CD4-positive, alpha-beta T cell (primary cell): ENCODE measurements at regions of chr19 and their contacts with region 1.

Region 1: GRCh38 chr19:12440541-12441316 is at the start of gene ZNF443:
- DNase-seq: peak; percentile 96 to 99 (median 98)
- ATAC-seq: peak; percentile 98
- H3K4me3 ChIP-seq: peak within 1 kb of the TSS; percentile 85
- H3K4me3 Mint-ChIP-seq: peak within 1 kb of the TSS; percentile 100
- H3K27ac ChIP-seq: peak within 1 kb of the TSS in 1 of 2 donors; percentile 46
- H3K27ac Mint-ChIP-seq: peak within 1 kb of the TSS; percentile 86
- H3K4me1 ChIP-seq: peaks cover 17% of the 10 kb centered on the region
- H3K4me1 Mint-ChIP-seq: peaks cover 13% of the 10 kb centered on the region
- H3K27me3 ChIP-seq: no peaks in the 10 kb centered on the region
- H3K27me3 Mint-ChIP-seq: no peaks in the 10 kb centered on the region
- CTCF ChIP-seq: no peak
- total RNA-seq, gene ZNF443: 1.8 to 2.0 TPM

Region 2: DNA sequence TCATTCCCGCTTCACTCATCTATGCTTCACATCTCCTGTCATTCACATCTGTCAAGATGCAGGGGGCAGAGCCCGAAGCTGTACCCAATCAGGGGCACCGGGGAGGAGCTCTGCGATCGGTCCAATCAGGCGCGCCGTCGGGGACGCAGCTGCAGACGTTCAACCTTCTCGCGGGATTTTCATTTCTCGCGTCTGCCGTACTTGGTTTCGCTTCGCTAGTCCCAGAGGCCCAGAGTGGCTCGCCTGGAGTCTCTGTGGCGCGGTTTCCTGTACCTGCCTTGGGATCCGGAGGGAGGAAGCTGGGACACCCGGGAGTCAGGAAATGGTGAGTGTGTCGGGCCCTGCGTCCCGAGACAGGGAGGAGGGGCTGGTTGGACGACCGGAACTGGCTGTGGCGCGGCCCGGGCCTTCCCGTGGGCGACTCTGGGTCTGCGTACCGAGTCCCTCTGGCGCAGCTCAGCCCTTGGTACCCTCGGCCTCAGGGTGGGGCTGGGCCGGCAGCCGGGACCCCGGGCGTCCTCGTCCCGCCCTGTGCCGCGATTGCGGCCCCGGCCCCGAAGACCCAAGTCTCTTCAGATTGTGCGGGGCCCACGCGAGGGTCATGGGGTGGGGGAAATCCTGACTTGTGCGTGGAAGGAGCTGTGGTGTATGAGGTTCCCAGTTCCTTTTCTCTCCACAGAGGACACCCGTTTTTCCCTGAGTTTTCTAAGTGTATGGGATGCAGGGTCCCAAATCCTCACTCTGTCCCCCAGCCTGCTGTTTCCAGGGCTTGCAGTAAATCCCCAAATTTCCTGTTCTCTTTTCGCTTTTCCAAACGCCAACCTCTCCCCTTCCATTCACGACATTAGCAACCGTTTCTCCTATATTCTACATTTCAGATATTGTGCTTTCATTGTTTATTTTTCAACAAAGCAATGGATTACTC is 277.6 kb before region 1 on chr19 and contains the start of gene ZNF136:
- CTCF ChIA-PET with region 1: no interaction called
- POLR2A ChIA-PET with region 1: interaction called, 4 read pairs
- intact Hi-C with region 1: loop called in 1 of 2 experiments (anchors 5 kb)
- DNase-seq: peak; percentile 84 to 97 (median 90)
- ATAC-seq: peak; percentile 99
- H3K4me3 ChIP-seq: peak within 1 kb of the TSS; percentile 89
- H3K4me3 Mint-ChIP-seq: peak within 1 kb of the TSS; percentile 97
- H3K27ac ChIP-seq: peak within 1 kb of the TSS; percentile 88 to 96
- H3K27ac Mint-ChIP-seq: peak within 1 kb of the TSS; percentile 89
- H3K4me1 ChIP-seq: peaks cover 42% of the 10 kb centered on the region
- H3K4me1 Mint-ChIP-seq: peaks cover 50% of the 10 kb centered on the region
- H3K27me3 ChIP-seq: no peaks in the 10 kb centered on the region
- H3K27me3 Mint-ChIP-seq: no peaks in the 10 kb centered on the region
- CTCF ChIP-seq: no peak
- total RNA-seq, gene ZNF136: 40.5 to 45.6 TPM

Region 3: GRCh38 chr19:12294249-12295158 is 146.2 kb before region 1 on chr19 and contains the start of gene ZNF44:
- CTCF ChIA-PET with region 1: no interaction called
- POLR2A ChIA-PET with region 1: no interaction called
- intact Hi-C with region 1: loop called (anchors 2 to 5 kb)
- DNase-seq: peak; percentile 88 to 99 (median 94)
- ATAC-seq: peak; percentile 95
- H3K4me3 ChIP-seq: peak within 1 kb of the TSS; percentile 96
- H3K4me3 Mint-ChIP-seq: peak within 1 kb of the TSS; percentile 98
- H3K27ac ChIP-seq: peak within 1 kb of the TSS; percentile 78 to 92
- H3K27ac Mint-ChIP-seq: peak within 1 kb of the TSS; percentile 99
- H3K4me1 ChIP-seq: peaks cover 46% of the 10 kb centered on the region
- H3K4me1 Mint-ChIP-seq: peaks cover 41% of the 10 kb centered on the region
- H3K27me3 ChIP-seq: no peaks in the 10 kb centered on the region
- H3K27me3 Mint-ChIP-seq: no peaks in the 10 kb centered on the region
- CTCF ChIP-seq: no peak
- total RNA-seq, gene ZNF44: 30.4 to 31.4 TPM

Region 4: DNA sequence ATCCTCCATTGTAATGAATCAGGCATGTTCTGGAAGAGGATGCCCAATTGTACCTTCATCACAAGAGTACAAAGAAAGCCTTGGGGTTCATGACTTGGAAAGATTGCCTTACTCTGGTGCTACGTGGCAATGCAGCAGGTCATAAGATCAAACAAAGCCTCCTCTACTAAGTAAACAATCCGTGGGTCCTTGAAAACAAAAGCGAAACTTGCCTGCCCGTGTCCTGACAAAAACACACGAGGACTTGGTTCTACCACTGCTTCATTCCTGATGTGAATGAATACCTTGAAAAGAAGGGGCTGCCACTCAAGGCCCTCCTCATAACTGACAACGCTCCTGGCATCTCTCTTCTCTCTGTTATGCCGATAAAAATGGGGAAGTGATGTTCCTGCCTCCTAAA is 126.2 kb before region 1 on chr19:
- CTCF ChIA-PET with region 1: no interaction called
- POLR2A ChIA-PET with region 1: no interaction called
- intact Hi-C with region 1: no loop called
- DNase-seq: peak in 1 of 14 experiments; percentile 21
- ATAC-seq: no peak
- H3K4me3 ChIP-seq: no peak overlapping the region
- H3K4me3 Mint-ChIP-seq: no peak overlapping the region
- H3K27ac ChIP-seq: no peak overlapping the region
- H3K27ac Mint-ChIP-seq: no peak overlapping the region
- H3K4me1 ChIP-seq: no peaks in the 10 kb centered on the region
- H3K4me1 Mint-ChIP-seq: peaks cover 5% of the 10 kb centered on the region
- H3K27me3 ChIP-seq: no peaks in the 10 kb centered on the region
- H3K27me3 Mint-ChIP-seq: no peaks in the 10 kb centered on the region
- CTCF ChIP-seq: no peak

Region 5: GRCh38 chr19:12400633-12401502 is 39.9 kb before region 1 on chr19 and contains the start of gene ZNF799:
- CTCF ChIA-PET with region 1: interaction called, 3 read pairs
- POLR2A ChIA-PET with region 1: interaction called, 11 read pairs
- intact Hi-C with region 1: loop called in 1 of 2 experiments (anchors 5 kb)
- DNase-seq: peak; percentile 54 to 90 (median 75)
- ATAC-seq: peak; percentile 92
- H3K4me3 ChIP-seq: peak within 1 kb of the TSS; percentile 95
- H3K4me3 Mint-ChIP-seq: peak within 1 kb of the TSS; percentile 93
- H3K27ac ChIP-seq: no peak within 1 kb of the TSS
- H3K27ac Mint-ChIP-seq: peak within 1 kb of the TSS; percentile 81
- H3K4me1 ChIP-seq: peaks cover 9% of the 10 kb centered on the region
- H3K4me1 Mint-ChIP-seq: peaks cover 27% of the 10 kb centered on the region
- H3K27me3 ChIP-seq: no peaks in the 10 kb centered on the region
- H3K27me3 Mint-ChIP-seq: no peaks in the 10 kb centered on the region
- CTCF ChIP-seq: no peak
- total RNA-seq, gene ZNF799: 1.1 to 1.6 TPM

Region 6: GRCh38 chr19:12425888-12426274 is 14.8 kb before region 1 on chr19:
- CTCF ChIA-PET with region 1: no interaction called
- POLR2A ChIA-PET with region 1: no interaction called
- intact Hi-C with region 1: no loop called
- DNase-seq: no peak
- ATAC-seq: no peak
- H3K4me3 ChIP-seq: no peak overlapping the region
- H3K4me3 Mint-ChIP-seq: no peak overlapping the region
- H3K27ac ChIP-seq: no peak overlapping the region
- H3K27ac Mint-ChIP-seq: no peak overlapping the region
- H3K4me1 ChIP-seq: no peaks in the 10 kb centered on the region
- H3K4me1 Mint-ChIP-seq: no peaks in the 10 kb centered on the region
- H3K27me3 ChIP-seq: no peaks in the 10 kb centered on the region
- H3K27me3 Mint-ChIP-seq: no peaks in the 10 kb centered on the region
- CTCF ChIP-seq: no peak

Region 7: DNA sequence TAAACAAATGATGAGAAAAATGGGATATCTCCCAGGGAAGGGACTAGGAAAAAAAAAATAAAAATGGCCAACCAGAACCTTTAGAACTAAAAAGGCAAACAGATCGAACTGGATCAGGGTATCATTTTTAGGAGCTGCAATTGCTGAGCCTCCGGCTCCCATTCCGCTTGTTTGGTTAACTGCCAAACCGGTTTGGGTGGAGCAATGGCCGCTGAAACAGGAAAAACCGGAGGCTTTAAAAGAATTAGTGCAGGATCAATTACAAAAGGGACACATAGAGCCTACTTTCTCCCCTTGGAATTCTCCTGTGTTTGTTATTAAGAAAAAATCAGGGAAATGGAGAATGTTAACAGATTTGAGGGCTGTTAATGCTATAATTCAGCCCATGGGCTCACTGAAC is 12.8 kb after region 1 on chr19:
- CTCF ChIA-PET with region 1: no interaction called
- POLR2A ChIA-PET with region 1: no interaction called
- intact Hi-C with region 1: no loop called
- DNase-seq: no peak
- ATAC-seq: no peak
- H3K4me3 ChIP-seq: no peak overlapping the region
- H3K4me3 Mint-ChIP-seq: no peak overlapping the region
- H3K27ac ChIP-seq: no peak overlapping the region
- H3K27ac Mint-ChIP-seq: no peak overlapping the region
- H3K4me1 ChIP-seq: no peaks in the 10 kb centered on the region
- H3K4me1 Mint-ChIP-seq: no peaks in the 10 kb centered on the region
- H3K27me3 ChIP-seq: no peaks in the 10 kb centered on the region
- H3K27me3 Mint-ChIP-seq: no peaks in the 10 kb centered on the region
- CTCF ChIP-seq: no peak

Region 8: GRCh38 chr19:12484371-12485051 is 43.8 kb after region 1 on chr19 and contains the start of gene ZNF709:
- CTCF ChIA-PET with region 1: no interaction called
- POLR2A ChIA-PET with region 1: no interaction called
- intact Hi-C with region 1: loop called (anchors 2 to 5 kb)
- DNase-seq: peak; percentile 73 to 93 (median 86)
- ATAC-seq: peak; percentile 98
- H3K4me3 ChIP-seq: peak within 1 kb of the TSS; percentile 99
- H3K4me3 Mint-ChIP-seq: peak within 1 kb of the TSS; percentile 98
- H3K27ac ChIP-seq: peak within 1 kb of the TSS; percentile 52 to 68
- H3K27ac Mint-ChIP-seq: peak within 1 kb of the TSS; percentile 97
- H3K4me1 ChIP-seq: peaks cover 37% of the 10 kb centered on the region
- H3K4me1 Mint-ChIP-seq: peaks cover 36% of the 10 kb centered on the region
- H3K27me3 ChIP-seq: no peaks in the 10 kb centered on the region
- H3K27me3 Mint-ChIP-seq: no peaks in the 10 kb centered on the region
- CTCF ChIP-seq: no peak
- total RNA-seq, gene ZNF709: 3.5 to 3.7 TPM

Region 9: GRCh38 chr19:12495002-12495802 is 54.5 kb after region 1 on chr19:
- CTCF ChIA-PET with region 1: interaction called, 3 read pairs
- POLR2A ChIA-PET with region 1: interaction called, 7 read pairs
- intact Hi-C with region 1: loop called in 1 of 2 experiments (anchors 2 kb)
- DNase-seq: peak; percentile 85 to 97 (median 91)
- ATAC-seq: peak; percentile 99
- H3K4me3 ChIP-seq: peak overlapping the region; percentile 67
- H3K4me3 Mint-ChIP-seq: peak overlapping the region; percentile 91
- H3K27ac ChIP-seq: peak overlapping the region; percentile 63 to 68
- H3K27ac Mint-ChIP-seq: peak overlapping the region; percentile 42
- H3K4me1 ChIP-seq: peaks cover 13% of the 10 kb centered on the region
- H3K4me1 Mint-ChIP-seq: peaks cover 12% of the 10 kb centered on the region
- H3K27me3 ChIP-seq: no peaks in the 10 kb centered on the region
- H3K27me3 Mint-ChIP-seq: no peaks in the 10 kb centered on the region
- CTCF ChIP-seq: peak; percentile 47